ENCODE measurements at regions of chr18 and their contacts with region 1.

Region 1: GRCh38 chr18:47100214-47100831 is 50.0 kb downstream of the HDHD2 start:
- DNase-seq: peak; percentile 65
- H3K4me3 Mint-ChIP-seq: no peak overlapping the region
- H3K27ac Mint-ChIP-seq: no peak overlapping the region
- H3K4me1 Mint-ChIP-seq: no peaks in the 10 kb centered on the region
- H3K27me3 Mint-ChIP-seq: no peaks in the 10 kb centered on the region
- CTCF ChIP-seq: peak; percentile 82

Region 2: GRCh38 chr18:47087676-47088075 is 12.6 kb before region 1 on chr18:
- CTCF ChIA-PET with region 1: interaction called, 23 read pairs
- POLR2A ChIA-PET with region 1: no interaction called
- intact Hi-C with region 1: no loop called
- DNase-seq: no peak
- H3K4me3 Mint-ChIP-seq: no peak overlapping the region
- H3K27ac Mint-ChIP-seq: no peak overlapping the region
- H3K4me1 Mint-ChIP-seq: no peaks in the 10 kb centered on the region
- H3K27me3 Mint-ChIP-seq: no peaks in the 10 kb centered on the region
- CTCF ChIP-seq: no peak

Region 3: GRCh38 chr18:47113796-47114540 is 13.6 kb after region 1 on chr18:
- CTCF ChIA-PET with region 1: interaction called, 13 read pairs
- POLR2A ChIA-PET with region 1: interaction called, 4 read pairs
- intact Hi-C with region 1: no loop called
- DNase-seq: no peak
- H3K4me3 Mint-ChIP-seq: no peak overlapping the region
- H3K27ac Mint-ChIP-seq: no peak overlapping the region
- H3K4me1 Mint-ChIP-seq: peaks cover 5% of the 10 kb centered on the region
- H3K27me3 Mint-ChIP-seq: no peaks in the 10 kb centered on the region
- CTCF ChIP-seq: no peak

Region 4: GRCh38 chr18:47283476-47283875 is 183.2 kb after region 1 on chr18:
- CTCF ChIA-PET with region 1: interaction called, 3 read pairs
- POLR2A ChIA-PET with region 1: no interaction called
- intact Hi-C with region 1: loop called (anchors 1 kb)
- DNase-seq: peak; percentile 63
- H3K4me3 Mint-ChIP-seq: no peak overlapping the region
- H3K27ac Mint-ChIP-seq: no peak overlapping the region
- H3K4me1 Mint-ChIP-seq: no peaks in the 10 kb centered on the region
- H3K27me3 Mint-ChIP-seq: peaks cover 86% of the 10 kb centered on the region
- CTCF ChIP-seq: peak; percentile 36

Region 5: GRCh38 chr18:47748847-47749599 is 648.7 kb after region 1 on chr18:
- CTCF ChIA-PET with region 1: interaction called, 7 read pairs
- POLR2A ChIA-PET with region 1: no interaction called
- intact Hi-C with region 1: loop called (anchors 5 kb)
- DNase-seq: peak; percentile 60
- H3K4me3 Mint-ChIP-seq: peak overlapping the region; percentile 59
- H3K27ac Mint-ChIP-seq: peak overlapping the region; percentile 49
- H3K4me1 Mint-ChIP-seq: no peaks in the 10 kb centered on the region
- H3K27me3 Mint-ChIP-seq: peaks cover 15% of the 10 kb centered on the region
- CTCF ChIP-seq: peak; percentile 99